SK-N-SH (cell line): ENCODE measurements at regions of chr18 and their contacts with region 1.

Region 1: GRCh38 chr18:34322365-34323289 is 97.9 kb upstream of the NOL4 start:
- DNase-seq: peak; percentile 36
- H3K4me3 ChIP-seq: no peak overlapping the region; a peak in 1 of 4 replicates
- H3K27ac ChIP-seq: no peak overlapping the region
- H3K4me1 ChIP-seq: peaks cover 0 to 3% of the 10 kb centered on the region in 2 experiments; a peak in 2 of 4 replicates
- H3K27me3 ChIP-seq: no peaks in the 10 kb centered on the region
- CTCF ChIP-seq: peak; percentile 91
- EP300 ChIP-seq: no peak
- RAD21 ChIP-seq: peak; percentile 96

Region 2: DNA sequence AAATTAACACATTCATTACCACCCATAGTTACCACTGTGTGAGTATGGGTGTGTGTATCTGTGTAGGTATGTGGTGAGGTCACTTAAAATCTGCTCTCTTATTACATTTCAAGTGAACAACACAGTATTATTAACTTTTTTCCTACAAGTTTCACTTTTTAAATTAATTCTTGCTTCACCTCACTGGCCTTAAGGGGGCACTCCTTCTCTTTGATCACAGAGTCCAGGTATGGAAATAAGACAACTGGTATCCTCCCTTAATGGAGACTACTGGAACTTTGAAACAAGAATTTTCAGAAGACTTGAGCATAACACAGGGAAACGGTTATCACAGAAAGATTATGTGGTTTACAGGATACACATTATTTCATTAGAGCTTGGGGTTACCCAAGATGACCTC is 488.8 kb before region 1 on chr18:
- CTCF ChIA-PET with region 1: interaction called, 28 read pairs
- POLR2A ChIA-PET with region 1: no interaction called
- DNase-seq: no peak
- H3K4me3 ChIP-seq: no peak overlapping the region
- H3K27ac ChIP-seq: no peak overlapping the region
- H3K4me1 ChIP-seq: no peaks in the 10 kb centered on the region; a peak in 1 of 4 replicates
- H3K27me3 ChIP-seq: no peaks in the 10 kb centered on the region
- CTCF ChIP-seq: no peak
- EP300 ChIP-seq: no peak
- RAD21 ChIP-seq: peak; percentile 32; the same call in 1 of the 2 replicates

Region 3: DNA sequence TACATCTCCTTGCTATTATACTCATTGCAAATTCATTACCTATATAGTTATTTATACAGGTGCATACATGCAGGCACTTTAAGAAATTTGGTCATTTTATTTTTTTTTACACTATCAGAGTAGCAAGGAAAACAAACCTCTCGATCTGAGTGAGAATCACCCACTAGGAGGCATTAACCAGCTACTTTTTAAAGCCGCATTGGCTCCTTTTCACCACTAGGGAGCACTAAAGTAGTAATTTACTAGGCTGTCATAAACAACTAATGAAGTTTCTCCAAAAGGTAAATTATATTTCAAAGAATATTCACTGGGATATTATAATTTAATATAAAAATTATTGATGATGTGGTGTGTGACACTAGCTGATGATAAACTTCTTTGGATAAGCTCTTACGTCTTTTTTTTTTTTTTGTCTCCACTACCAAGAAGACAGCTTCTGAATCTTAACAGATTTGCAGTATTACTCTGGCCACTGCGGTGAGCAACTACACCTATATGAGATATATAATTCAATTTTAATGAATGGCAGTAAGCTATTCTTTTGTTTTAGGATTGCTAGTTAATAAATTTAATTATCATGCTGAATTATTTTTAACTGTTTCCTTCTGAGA is 199.8 kb before region 1 on chr18:
- CTCF ChIA-PET with region 1: interaction called, 161 read pairs
- POLR2A ChIA-PET with region 1: interaction called, 4 read pairs
- DNase-seq: peak; percentile 55
- H3K4me3 ChIP-seq: peak overlapping the region in 1 of 2 experiments; percentile 21; a peak in 1 of 4 replicates
- H3K27ac ChIP-seq: no peak overlapping the region
- H3K4me1 ChIP-seq: peaks cover 1 to 3% of the 10 kb centered on the region in 2 experiments; a peak in 2 of 4 replicates
- H3K27me3 ChIP-seq: no peaks in the 10 kb centered on the region
- CTCF ChIP-seq: peak; percentile 97
- EP300 ChIP-seq: no peak
- RAD21 ChIP-seq: peak; percentile 91

Region 4: GRCh38 chr18:34158881-34159690 is 163.5 kb before region 1 on chr18:
- CTCF ChIA-PET with region 1: interaction called, 23 read pairs
- POLR2A ChIA-PET with region 1: no interaction called
- DNase-seq: peak; percentile 87
- H3K4me3 ChIP-seq: peak overlapping the region; percentile 51; a peak in 3 of 4 replicates
- H3K27ac ChIP-seq: peak overlapping the region in 1 of 2 experiments; percentile 96; a peak in 2 of 4 replicates
- H3K4me1 ChIP-seq: peaks cover 10 to 12% of the 10 kb centered on the region in 2 experiments; a peak in 3 of 4 replicates
- H3K27me3 ChIP-seq: peaks cover 11% of the 10 kb centered on the region; the same call in 1 of the 2 replicates
- CTCF ChIP-seq: peak; percentile 35
- EP300 ChIP-seq: 0 out of 4 replicates have a peak, but pooled peaks of 1 of the 2 experiments have one; percentile 21
- RAD21 ChIP-seq: peak; percentile 47

Region 5: GRCh38 chr18:34281722-34282121 is 40.9 kb before region 1 on chr18:
- CTCF ChIA-PET with region 1: interaction called, 21 read pairs
- POLR2A ChIA-PET with region 1: no interaction called
- DNase-seq: no peak
- H3K4me3 ChIP-seq: no peak overlapping the region
- H3K27ac ChIP-seq: peak overlapping the region in 1 of 2 experiments; percentile 89; a peak in 2 of 4 replicates
- H3K4me1 ChIP-seq: peaks cover 0 to 13% of the 10 kb centered on the region in 2 experiments; a peak in 2 of 4 replicates
- H3K27me3 ChIP-seq: no peaks in the 10 kb centered on the region
- CTCF ChIP-seq: no peak
- EP300 ChIP-seq: no peak
- RAD21 ChIP-seq: no peak

Region 6: DNA sequence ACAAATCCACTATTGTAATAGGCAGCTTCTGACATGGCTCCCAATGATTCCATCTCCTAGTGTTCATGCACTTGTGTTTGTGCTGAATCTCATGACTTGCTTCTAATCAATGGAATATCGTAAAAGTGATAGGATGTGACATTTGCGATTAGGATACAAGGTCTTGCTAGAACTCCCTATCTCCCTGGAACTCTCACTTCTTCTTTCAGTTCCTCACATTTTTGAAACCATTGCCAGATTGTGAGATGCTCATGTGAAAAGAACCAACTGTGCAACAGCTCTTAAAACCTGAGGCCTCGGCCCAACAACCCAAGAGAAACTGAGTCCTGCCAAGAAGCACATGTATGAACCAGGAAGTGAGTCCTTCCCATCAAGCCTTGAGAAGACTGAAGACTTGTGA is 160.6 kb after region 1 on chr18:
- CTCF ChIA-PET with region 1: no interaction called
- POLR2A ChIA-PET with region 1: no interaction called
- DNase-seq: no peak
- H3K4me3 ChIP-seq: no peak overlapping the region
- H3K27ac ChIP-seq: no peak overlapping the region
- H3K4me1 ChIP-seq: no peaks in the 10 kb centered on the region
- H3K27me3 ChIP-seq: no peaks in the 10 kb centered on the region
- CTCF ChIP-seq: no peak
- EP300 ChIP-seq: no peak
- RAD21 ChIP-seq: no peak

Region 7: DNA sequence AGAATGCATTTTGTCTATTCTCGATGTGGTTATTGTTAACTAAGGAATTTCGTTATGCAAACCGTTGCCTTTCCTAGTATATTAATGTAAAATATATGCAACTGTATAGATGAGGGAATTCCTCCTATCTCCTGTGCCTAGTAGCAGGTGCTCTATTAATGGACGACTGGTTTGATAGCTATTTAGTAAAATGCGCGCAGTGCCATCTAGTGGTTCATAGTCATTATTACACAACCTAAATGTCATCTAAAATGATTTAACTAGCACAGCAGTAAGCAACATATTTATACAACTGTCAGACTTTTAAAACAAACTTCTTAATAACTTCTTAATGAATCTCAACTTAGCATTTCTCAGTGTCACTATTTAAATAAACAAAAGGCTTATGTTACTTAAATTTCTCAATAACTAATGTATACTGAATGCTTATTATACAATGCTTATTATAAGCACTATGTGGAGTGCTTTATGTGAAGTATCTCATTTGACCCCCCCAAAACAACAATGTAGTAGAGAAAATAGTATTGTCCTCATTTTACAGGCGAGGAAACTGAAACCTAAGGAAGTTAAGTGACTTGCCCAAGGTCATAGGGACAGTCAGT is 465.4 kb after region 1 on chr18:
- CTCF ChIA-PET with region 1: interaction called, 10 read pairs
- POLR2A ChIA-PET with region 1: no interaction called
- DNase-seq: peak; percentile 53
- H3K4me3 ChIP-seq: no peak overlapping the region; a peak in 1 of 4 replicates
- H3K27ac ChIP-seq: no peak overlapping the region
- H3K4me1 ChIP-seq: 0 out of 4 replicates have a peak, but pooled peaks cover 0 to 6% of the 10 kb centered on the region in 2 experiments
- H3K27me3 ChIP-seq: no peaks in the 10 kb centered on the region
- CTCF ChIP-seq: peak; percentile 84
- EP300 ChIP-seq: no peak
- RAD21 ChIP-seq: peak; percentile 94